ENCODE measurements at regions of chr5 and their contacts with region 1.

Region 1: DNA sequence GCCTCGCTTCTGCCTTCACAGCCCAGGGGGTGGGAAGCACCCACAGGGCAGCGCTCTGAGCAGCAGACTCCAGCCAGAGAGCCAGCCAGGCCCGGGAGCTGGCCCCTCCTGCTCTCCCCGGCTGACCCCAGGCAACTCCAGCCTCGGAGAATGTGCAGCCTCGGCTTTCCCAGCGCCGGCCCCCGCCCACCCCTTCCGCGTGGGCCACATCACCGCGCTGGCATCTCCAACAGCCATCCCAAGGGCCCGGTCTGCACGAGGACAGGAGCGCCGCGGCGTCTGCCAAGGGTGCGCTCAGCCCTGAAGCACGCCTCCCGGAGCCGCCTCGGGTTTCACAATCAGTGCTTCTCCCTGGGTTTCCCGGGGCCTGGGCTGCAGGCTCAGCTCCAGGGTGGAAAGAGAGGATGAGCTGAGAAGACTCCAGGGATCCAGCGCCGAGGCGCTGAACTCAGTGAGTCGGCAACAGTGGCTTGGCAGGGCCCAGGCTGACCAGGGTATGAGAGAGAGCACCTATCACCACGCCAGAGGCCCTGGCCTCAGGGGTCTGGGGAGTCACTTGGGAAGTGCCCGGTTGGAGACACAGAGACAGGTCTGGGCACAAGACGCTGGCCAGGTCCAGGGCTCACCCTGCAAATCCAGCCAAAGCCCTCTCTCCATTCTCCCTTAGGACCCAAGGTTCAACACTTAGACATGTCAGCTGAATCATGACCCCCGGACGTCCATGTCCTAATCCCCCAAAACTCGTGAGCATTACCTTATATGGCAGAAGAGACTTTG is 79.6 kb downstream of the ADAMTS2 start:
- DNase-seq: peak; percentile 99
- H3K4me3 ChIP-seq: peak overlapping the region in 3 of 4 donors; percentile 14 to 30 (median 28)
- H3K27ac ChIP-seq: peak overlapping the region; percentile 82 to 92 (median 86)
- H3K4me1 ChIP-seq: peaks cover 0 to 51% (median 43%) of the 10 kb centered on the region in 4 donors
- H3K27me3 ChIP-seq: no peaks in the 10 kb centered on the region
- CTCF ChIP-seq: no peak
- EP300 ChIP-seq: peak in 2 of 4 donors; percentile 62 to 84
- POLR2A ChIP-seq: peak in 1 of 2 donors; percentile 20

Region 2: DNA sequence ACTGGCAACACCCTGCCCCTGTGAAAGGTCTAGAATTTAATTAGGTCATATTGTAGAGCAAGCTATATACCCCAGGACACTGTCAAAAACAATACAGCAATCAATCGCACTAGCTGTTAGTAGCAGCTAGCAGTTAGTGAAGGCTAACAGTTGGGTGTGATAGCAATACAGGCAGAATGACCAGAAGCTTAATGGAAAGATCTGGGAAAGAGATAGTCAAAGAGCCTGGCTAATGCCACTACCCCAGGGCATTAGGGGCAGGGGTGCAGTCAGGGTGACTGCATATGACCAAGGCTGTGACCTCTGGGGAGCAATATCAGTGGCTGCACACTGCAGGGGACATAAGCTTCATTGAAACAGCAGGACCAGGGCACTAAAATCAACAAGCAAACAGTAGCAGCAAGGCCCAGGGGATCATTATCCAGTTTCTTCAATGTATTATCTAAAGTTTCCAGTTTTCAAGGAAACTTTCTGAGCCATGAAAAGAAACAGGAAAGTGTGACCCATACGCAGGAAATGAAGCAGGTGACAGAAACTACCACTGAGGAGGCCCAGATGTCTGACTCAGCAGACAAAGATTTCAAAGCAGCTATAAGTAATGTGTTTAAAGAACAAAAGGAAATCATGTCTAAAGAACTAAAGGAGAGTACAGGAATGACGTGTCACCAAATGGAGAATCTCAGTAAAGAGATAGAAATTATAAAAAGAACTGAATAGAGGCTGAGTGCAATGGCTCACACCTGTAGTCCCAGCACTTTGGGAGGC is 123.1 kb before region 1 on chr5:
- intact Hi-C with region 1: no loop called
- DNase-seq: no peak
- H3K4me3 ChIP-seq: no peak overlapping the region
- H3K27ac ChIP-seq: no peak overlapping the region
- H3K4me1 ChIP-seq: no peaks in the 10 kb centered on the region
- H3K27me3 ChIP-seq: no peaks in the 10 kb centered on the region
- CTCF ChIP-seq: no peak
- EP300 ChIP-seq: no peak
- POLR2A ChIP-seq: no peak

Region 3: DNA sequence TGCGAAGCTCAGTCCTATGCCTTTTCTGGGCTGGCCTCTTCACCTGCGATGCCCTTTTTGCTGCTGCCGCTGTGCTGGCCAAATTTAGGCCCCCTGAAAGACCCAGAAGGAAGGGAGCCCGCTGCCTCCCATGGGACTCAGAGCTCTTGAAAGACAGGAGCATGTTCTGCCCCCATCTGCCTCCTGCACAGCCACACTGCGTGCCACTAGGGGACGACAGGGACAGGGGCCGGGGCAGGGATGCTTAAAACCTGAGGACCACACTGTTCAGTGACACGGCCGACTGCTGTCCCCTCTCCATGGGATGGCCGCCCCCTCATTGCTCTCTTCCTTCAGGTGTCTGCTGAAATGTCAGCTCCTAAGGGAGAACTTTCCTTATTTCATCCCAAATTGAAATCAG is 52.8 kb before region 1 on chr5:
- intact Hi-C with region 1: no loop called
- DNase-seq: no peak
- H3K4me3 ChIP-seq: no peak overlapping the region
- H3K27ac ChIP-seq: no peak overlapping the region
- H3K4me1 ChIP-seq: peaks cover 0 to under 1% (median 0%) of the 10 kb centered on the region in 4 donors
- H3K27me3 ChIP-seq: no peaks in the 10 kb centered on the region
- CTCF ChIP-seq: peak in 1 of 4 experiments; percentile 44
- EP300 ChIP-seq: no peak
- POLR2A ChIP-seq: no peak

Region 4: GRCh38 chr5:179313849-179314521 is 48.3 kb after region 1 on chr5:
- intact Hi-C with region 1: loop called (anchors 1 kb)
- DNase-seq: peak; percentile 95
- H3K4me3 ChIP-seq: peak overlapping the region in 3 of 4 donors; percentile 10 to 32 (median 20)
- H3K27ac ChIP-seq: peak overlapping the region; percentile 39 to 80 (median 60)
- H3K4me1 ChIP-seq: peaks cover 0 to 20% (median 17%) of the 10 kb centered on the region in 4 donors
- H3K27me3 ChIP-seq: no peaks in the 10 kb centered on the region
- CTCF ChIP-seq: no peak
- EP300 ChIP-seq: no peak
- POLR2A ChIP-seq: no peak

Region 5: GRCh38 chr5:179462040-179462439 is 196.3 kb after region 1 on chr5:
- intact Hi-C with region 1: no loop called
- DNase-seq: peak; percentile 33
- H3K4me3 ChIP-seq: no peak overlapping the region
- H3K27ac ChIP-seq: no peak overlapping the region
- H3K4me1 ChIP-seq: no peaks in the 10 kb centered on the region
- H3K27me3 ChIP-seq: peaks cover 0 to 5% (median 0%) of the 10 kb centered on the region in 3 donors
- CTCF ChIP-seq: no peak
- EP300 ChIP-seq: no peak
- POLR2A ChIP-seq: no peak

Region 6: DNA sequence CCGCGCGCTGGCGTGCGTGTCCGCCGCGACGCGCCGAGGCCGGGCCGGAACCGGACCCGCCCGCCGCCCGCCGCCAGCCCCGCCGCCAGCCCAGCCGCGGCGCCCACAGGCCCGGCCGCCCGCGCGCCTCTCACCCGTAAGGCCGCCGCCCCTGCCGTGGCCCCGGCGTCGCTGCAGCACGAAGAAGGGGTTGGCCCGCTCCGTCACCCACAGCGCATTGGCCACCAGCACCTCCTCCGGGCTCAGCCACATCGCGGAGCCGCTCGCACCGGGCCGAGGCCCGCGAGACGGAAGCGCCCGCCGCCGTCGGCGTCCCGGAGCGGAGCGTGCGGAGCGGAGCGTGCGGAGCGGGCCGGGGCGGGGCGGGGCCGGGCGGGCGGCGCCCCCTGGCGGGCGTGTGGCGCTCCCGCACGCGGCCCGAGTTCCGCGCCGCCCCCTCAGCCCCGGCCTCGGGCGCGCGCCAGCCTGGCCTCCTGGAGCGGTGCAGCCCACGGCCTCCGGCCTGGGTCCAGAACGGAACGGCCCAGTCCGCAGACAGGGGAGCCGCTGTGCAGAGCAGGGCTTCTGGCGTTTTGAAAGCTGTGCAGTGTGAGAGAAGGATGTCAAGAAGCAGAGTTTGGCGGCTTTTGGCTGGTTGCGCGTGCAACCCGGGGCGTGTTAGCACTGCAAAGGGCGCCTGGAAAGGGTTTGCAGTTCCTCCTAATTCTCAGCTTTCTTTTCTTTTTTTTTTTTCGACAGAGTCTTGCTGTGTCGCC is 642.0 kb after region 1 on chr5 and contains the start of gene TBC1D9B:
- intact Hi-C with region 1: no loop called
- DNase-seq: peak; percentile 88
- H3K4me3 ChIP-seq: peak within 1 kb of the TSS; percentile 52 to 72 (median 66)
- H3K27ac ChIP-seq: peak within 1 kb of the TSS; percentile 78 to 85 (median 80)
- H3K4me1 ChIP-seq: peaks cover 0 to 21% (median 19%) of the 10 kb centered on the region in 4 donors
- H3K27me3 ChIP-seq: no peaks in the 10 kb centered on the region
- CTCF ChIP-seq: no peak
- EP300 ChIP-seq: no peak
- POLR2A ChIP-seq: no peak
- total RNA-seq, gene TBC1D9B: 291 to 1,545 (median 1,005) TPM

Measured in sigmoid colon (tissue), 7 donors.